ENCODE measurements at regions of chr17 and their contacts with region 1.

Region 1: GRCh38 chr17:13337864-13338371 is 263.8 kb downstream of the HS3ST3A1 start:
- DNase-seq: peak; percentile 84
- H3K4me3 ChIP-seq: peak overlapping the region; percentile 75
- H3K27ac ChIP-seq: peak overlapping the region; percentile 53
- H3K4me1 ChIP-seq: peaks cover 23% of the 10 kb centered on the region
- H3K27me3 ChIP-seq: no peaks in the 10 kb centered on the region

Region 2: DNA sequence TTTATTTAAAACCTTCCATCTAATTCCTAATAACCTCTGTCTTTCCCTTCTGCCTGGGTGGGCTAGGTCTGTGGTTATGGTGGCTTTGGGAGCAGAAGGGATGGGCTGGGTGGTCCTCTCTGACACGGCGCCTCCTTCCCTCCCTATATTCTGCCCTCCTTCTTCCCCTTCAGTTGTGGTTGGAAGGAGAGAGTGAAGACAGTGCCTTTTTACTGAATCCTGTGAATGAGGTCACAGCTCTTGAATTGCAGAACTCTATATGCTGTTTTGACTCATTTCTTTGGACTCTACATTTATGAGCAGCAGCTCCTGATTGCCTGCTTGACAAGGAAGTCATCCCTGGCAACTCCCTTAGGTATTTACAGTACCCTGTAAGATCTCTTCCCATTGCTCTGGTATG is 64.1 kb before region 1 on chr17:
- in situ Hi-C with region 1: no loop called
- DNase-seq: peak; percentile 84
- H3K4me3 ChIP-seq: no peak overlapping the region
- H3K27ac ChIP-seq: no peak overlapping the region
- H3K4me1 ChIP-seq: peaks cover 14% of the 10 kb centered on the region; the same call in 1 of the 2 replicates
- H3K27me3 ChIP-seq: no peaks in the 10 kb centered on the region; the same call in 1 of the 2 replicates

Region 3: GRCh38 chr17:14069251-14070021 is 731.5 kb after region 1 on chr17 and contains the start of gene COX10:
- in situ Hi-C with region 1: loop called (anchors 25 kb)
- DNase-seq: peak; percentile 94
- H3K4me3 ChIP-seq: peak within 1 kb of the TSS; percentile 96
- H3K27ac ChIP-seq: peak within 1 kb of the TSS; percentile 51
- H3K4me1 ChIP-seq: peaks cover 20% of the 10 kb centered on the region
- H3K27me3 ChIP-seq: no peaks in the 10 kb centered on the region
- total RNA-seq, gene COX10: 13.9 and 24.4 TPM in 2 replicates

Region 4: DNA sequence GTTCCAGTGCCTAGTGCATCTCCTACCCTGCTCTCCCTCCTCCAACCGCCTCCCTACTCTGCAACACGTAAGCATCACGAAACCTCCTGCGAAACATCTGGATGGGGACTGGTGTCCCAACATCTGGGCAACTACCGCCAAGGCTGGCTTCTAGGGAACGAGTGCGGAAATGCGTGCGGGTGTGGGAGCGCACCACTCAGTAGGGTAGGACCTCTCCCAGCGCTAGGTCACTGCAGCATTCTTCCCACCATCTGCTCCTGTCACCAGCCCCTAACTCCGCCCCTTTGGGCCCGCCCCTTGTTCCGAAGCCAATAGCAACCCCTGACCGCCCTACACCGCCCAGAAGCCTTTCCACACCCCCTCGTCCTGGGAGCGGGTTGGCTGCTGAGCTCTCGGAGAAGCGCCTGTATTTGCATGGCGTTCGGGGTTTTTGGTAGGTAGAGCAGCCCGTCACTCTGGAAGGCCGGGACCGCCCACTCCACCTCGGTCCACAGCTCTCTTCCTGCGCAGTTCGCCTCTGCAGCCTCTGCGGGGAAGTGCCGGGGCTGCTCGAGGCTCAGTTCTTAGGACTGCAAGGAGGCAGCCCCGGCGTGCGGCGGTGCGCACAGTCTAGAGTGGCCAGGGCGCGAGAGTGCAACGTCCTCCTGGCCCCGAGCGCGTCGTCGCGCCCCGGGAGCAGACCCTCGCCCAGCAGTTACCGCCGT is 962.8 kb after region 1 on chr17 and contains the start of gene HS3ST3B1:
- in situ Hi-C with region 1: loop called (anchors 10 kb)
- DNase-seq: peak; percentile 99
- H3K4me3 ChIP-seq: peak within 1 kb of the TSS; percentile 91
- H3K27ac ChIP-seq: peak within 1 kb of the TSS; percentile 86
- H3K4me1 ChIP-seq: peaks cover 30% of the 10 kb centered on the region
- H3K27me3 ChIP-seq: no peaks in the 10 kb centered on the region
- total RNA-seq, gene HS3ST3B1: 41.9 and 45.5 TPM in 2 replicates

Measured in GM23248 (cell line).